ENCODE measurements at regions of chr10 and their contacts with region 1.

Region 1: GRCh38 chr10:80078448-80079311 is at the start of gene TMEM254:
- DNase-seq: peak; percentile 100
- ATAC-seq: peak; percentile 85
- H3K4me3 ChIP-seq: peak within 1 kb of the TSS; percentile 67
- H3K27ac ChIP-seq: peak within 1 kb of the TSS; percentile 72
- H3K4me1 ChIP-seq: peaks cover 39% of the 10 kb centered on the region
- H3K27me3 ChIP-seq: no peaks in the 10 kb centered on the region
- CTCF ChIP-seq: no peak
- total RNA-seq, gene TMEM254: 53.7 and 68.3 TPM in 2 replicates

Region 2: GRCh38 chr10:79374312-79375191 is 704.1 kb before region 1 on chr10:
- CTCF ChIA-PET with region 1: no interaction called
- POLR2A ChIA-PET with region 1: no interaction called
- intact Hi-C with region 1: loop called (anchors 5 kb)
- DNase-seq: peak; percentile 100
- ATAC-seq: peak; percentile 81
- H3K4me3 ChIP-seq: no peak overlapping the region
- H3K27ac ChIP-seq: no peak overlapping the region
- H3K4me1 ChIP-seq: peaks cover 10% of the 10 kb centered on the region
- H3K27me3 ChIP-seq: no peaks in the 10 kb centered on the region
- CTCF ChIP-seq: peak; percentile 100

Region 3: DNA sequence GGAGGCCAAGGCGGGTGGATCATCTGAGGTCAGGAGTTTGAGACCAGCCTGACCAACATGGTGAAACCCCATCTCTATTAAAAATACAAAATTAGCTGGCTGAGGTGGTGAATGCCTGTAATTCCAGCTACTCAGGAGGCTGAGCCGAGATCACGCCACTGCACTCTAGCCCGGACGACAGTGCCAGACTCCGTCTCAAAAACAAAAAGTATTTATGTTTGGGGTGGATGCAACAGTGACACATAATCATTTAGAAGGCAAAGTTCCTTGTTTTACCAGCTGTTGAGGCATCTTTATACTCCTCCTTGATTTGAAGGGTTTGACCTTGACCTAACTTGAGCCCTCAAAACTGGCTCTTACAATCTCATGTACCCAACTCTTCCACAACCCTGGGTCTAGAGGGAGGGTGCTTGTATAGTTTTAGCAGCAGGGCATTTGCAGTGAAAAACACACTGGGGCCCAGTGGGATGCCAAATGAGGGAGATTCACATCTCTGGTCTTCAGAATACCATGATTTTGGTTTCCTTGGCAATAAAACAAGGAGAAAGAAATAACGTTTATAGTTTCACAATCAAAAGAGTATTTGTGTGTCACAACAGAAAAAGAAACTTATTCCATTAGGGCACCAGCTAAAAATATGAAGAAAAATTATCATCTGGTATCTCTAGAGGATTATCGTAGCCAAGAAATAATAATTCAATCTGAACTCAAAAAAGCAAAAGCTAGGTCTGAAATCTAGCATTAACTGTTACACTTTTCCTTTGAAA is 14.4 kb before region 1 on chr10:
- CTCF ChIA-PET with region 1: interaction called, 20 read pairs
- POLR2A ChIA-PET with region 1: interaction called, 7 read pairs
- intact Hi-C with region 1: no loop called
- DNase-seq: no peak
- ATAC-seq: no peak
- H3K4me3 ChIP-seq: no peak overlapping the region
- H3K27ac ChIP-seq: no peak overlapping the region
- H3K4me1 ChIP-seq: no peaks in the 10 kb centered on the region
- H3K27me3 ChIP-seq: no peaks in the 10 kb centered on the region
- CTCF ChIP-seq: no peak

Region 4: GRCh38 chr10:80144067-80144695 is 65.5 kb after region 1 on chr10:
- CTCF ChIA-PET with region 1: interaction called, 17 read pairs
- POLR2A ChIA-PET with region 1: interaction called, 4 read pairs
- intact Hi-C with region 1: no loop called
- DNase-seq: peak; percentile 97
- ATAC-seq: peak; percentile 77
- H3K4me3 ChIP-seq: peak overlapping the region; percentile 64
- H3K27ac ChIP-seq: peak overlapping the region; percentile 17
- H3K4me1 ChIP-seq: peaks cover 24% of the 10 kb centered on the region
- H3K27me3 ChIP-seq: no peaks in the 10 kb centered on the region; the same call in 1 of the 2 replicates
- CTCF ChIP-seq: peak; percentile 4; the same call in 1 of the 2 replicates

Region 5: DNA sequence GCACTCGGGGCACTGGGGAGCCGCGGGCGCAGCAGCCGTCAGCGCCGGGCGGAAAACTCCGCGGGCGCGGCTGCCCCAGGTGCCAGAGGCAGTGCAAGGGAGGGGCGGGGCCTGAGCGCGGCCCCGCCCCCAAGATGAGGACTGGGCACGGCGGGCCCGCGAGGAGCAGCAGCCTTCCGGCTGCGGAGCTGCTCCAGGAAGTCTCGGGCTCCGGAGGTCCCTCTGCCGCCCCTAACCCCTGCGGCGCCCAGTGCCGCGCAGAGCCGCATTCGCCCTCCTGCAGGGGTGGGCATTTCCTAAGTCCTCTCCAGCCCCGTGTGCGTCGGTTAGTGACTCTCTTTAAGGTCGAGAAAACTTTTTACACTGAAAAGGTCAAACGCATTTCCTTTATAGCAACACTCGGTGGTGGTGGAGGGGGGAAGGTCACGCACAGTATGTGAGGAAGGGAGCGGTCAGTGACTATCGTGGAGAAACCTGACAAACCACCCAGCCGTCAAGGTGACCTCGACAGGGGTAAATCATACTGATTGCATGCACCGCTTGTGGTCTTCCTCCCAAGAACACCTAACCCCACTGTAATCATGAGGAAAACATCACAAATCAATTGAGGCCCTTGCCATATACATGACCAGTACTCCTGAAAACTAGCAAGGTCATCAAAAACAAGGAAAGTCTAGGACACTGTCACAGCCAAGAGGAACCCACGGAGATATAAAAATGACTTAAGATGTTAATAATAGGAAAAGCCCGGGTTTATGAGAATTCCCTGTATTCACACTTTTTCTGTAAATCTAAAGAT is 127.0 kb after region 1 on chr10 and contains the start of gene ANXA11:
- CTCF ChIA-PET with region 1: no interaction called
- POLR2A ChIA-PET with region 1: interaction called, 6 read pairs
- intact Hi-C with region 1: loop called (anchors 1 kb)
- DNase-seq: peak; percentile 100
- ATAC-seq: peak; percentile 52
- H3K4me3 ChIP-seq: peak within 1 kb of the TSS; percentile 69
- H3K27ac ChIP-seq: peak within 1 kb of the TSS; percentile 80
- H3K4me1 ChIP-seq: peaks cover 80% of the 10 kb centered on the region
- H3K27me3 ChIP-seq: no peaks in the 10 kb centered on the region
- CTCF ChIP-seq: peak; percentile 1; the same call in 1 of the 2 replicates
- total RNA-seq, gene ANXA11: 434 and 520 TPM in 2 replicates

Measured in PC-3 (cell line).